ENCODE measurements at regions of chr5 and their contacts with region 1.

Region 1: DNA sequence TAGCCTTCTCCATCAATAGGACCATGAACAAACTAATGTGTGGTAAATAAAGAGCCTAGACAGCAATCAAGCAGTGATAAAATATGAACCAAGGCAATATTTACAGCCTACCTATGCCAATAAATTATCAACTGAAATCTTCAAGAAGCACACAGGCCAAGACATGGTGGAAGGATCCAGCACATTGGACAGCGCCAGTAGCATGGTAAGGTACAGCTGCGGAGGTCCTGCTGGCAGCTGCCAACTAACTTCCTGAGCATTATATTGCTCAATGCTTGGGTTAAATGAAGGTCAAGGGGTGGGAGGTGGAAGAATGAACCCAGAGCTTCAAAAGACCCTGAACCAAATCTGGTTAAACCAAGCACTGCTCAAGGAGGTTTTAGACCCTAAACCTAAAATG is 16.5 kb upstream of the SPDL1 start:
- DNase-seq: peak; percentile 10
- ATAC-seq: no peak
- H3K4me3 ChIP-seq: no peak overlapping the region
- H3K27ac ChIP-seq: no peak overlapping the region
- H3K4me1 ChIP-seq: no peaks in the 10 kb centered on the region
- H3K27me3 ChIP-seq: peaks cover 8% of the 10 kb centered on the region
- CTCF ChIP-seq: no peak
- POLR2A ChIP-seq: no peak
- RAD21 ChIP-seq: no peak

Region 2: GRCh38 chr5:169265888-169266287 is 301.2 kb before region 1 on chr5:
- CTCF ChIA-PET with region 1: no interaction called
- POLR2A ChIA-PET with region 1: no interaction called
- dilution Hi-C with region 1: no loop called
- in situ Hi-C with region 1: no loop called
- intact Hi-C with region 1: no loop called
- DNase-seq: peak; percentile 2
- ATAC-seq: no peak
- H3K4me3 ChIP-seq: no peak overlapping the region
- H3K27ac ChIP-seq: no peak overlapping the region
- H3K4me1 ChIP-seq: no peaks in the 10 kb centered on the region
- H3K27me3 ChIP-seq: no peaks in the 10 kb centered on the region
- CTCF ChIP-seq: peak; percentile 20; the same call in 1 of the 2 replicates
- POLR2A ChIP-seq: no peak
- RAD21 ChIP-seq: no peak

Region 3: DNA sequence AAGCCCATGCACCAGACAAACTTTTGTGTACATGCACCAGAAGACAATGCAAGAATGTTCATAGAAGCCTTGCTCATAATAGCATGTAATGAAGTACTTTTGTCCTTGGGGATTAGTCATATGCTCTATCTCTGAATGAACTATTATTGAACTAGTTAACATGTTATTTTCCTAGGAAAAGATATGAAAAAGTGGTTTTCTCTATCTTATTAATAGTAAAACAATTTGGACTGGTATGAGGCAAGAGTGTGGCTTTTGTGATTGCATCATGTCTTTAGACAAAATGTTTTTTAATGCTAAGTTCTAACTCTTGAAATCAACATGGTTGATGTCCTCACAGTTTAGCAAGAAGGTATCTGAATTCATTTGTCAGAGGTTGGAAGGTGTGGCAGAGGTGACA is 39.2 kb before region 1 on chr5:
- CTCF ChIA-PET with region 1: no interaction called
- POLR2A ChIA-PET with region 1: no interaction called
- dilution Hi-C with region 1: no loop called
- in situ Hi-C with region 1: no loop called
- intact Hi-C with region 1: loop called (anchors 1 kb)
- DNase-seq: no peak
- ATAC-seq: no peak
- H3K4me3 ChIP-seq: no peak overlapping the region
- H3K27ac ChIP-seq: no peak overlapping the region
- H3K4me1 ChIP-seq: no peaks in the 10 kb centered on the region
- H3K27me3 ChIP-seq: no peaks in the 10 kb centered on the region
- CTCF ChIP-seq: no peak
- POLR2A ChIP-seq: no peak
- RAD21 ChIP-seq: no peak

Measured in IMR-90 (cell line).